ENCODE measurements at regions of chr11 and their contacts with region 1.

Region 1: GRCh38 chr11:17384002-17384511 is 4.4 kb downstream of the KCNJ11 start:
- DNase-seq: peak; percentile 73
- H3K4me3 ChIP-seq: no peak overlapping the region
- H3K27ac ChIP-seq: no peak overlapping the region
- H3K4me1 ChIP-seq: peaks cover 0 to 4% of the 10 kb centered on the region in 2 experiments; a peak in 1 of 4 replicates
- H3K27me3 ChIP-seq: no peaks in the 10 kb centered on the region
- CTCF ChIP-seq: peak; percentile 90
- EP300 ChIP-seq: no peak
- RAD21 ChIP-seq: peak; percentile 91

Region 2: DNA sequence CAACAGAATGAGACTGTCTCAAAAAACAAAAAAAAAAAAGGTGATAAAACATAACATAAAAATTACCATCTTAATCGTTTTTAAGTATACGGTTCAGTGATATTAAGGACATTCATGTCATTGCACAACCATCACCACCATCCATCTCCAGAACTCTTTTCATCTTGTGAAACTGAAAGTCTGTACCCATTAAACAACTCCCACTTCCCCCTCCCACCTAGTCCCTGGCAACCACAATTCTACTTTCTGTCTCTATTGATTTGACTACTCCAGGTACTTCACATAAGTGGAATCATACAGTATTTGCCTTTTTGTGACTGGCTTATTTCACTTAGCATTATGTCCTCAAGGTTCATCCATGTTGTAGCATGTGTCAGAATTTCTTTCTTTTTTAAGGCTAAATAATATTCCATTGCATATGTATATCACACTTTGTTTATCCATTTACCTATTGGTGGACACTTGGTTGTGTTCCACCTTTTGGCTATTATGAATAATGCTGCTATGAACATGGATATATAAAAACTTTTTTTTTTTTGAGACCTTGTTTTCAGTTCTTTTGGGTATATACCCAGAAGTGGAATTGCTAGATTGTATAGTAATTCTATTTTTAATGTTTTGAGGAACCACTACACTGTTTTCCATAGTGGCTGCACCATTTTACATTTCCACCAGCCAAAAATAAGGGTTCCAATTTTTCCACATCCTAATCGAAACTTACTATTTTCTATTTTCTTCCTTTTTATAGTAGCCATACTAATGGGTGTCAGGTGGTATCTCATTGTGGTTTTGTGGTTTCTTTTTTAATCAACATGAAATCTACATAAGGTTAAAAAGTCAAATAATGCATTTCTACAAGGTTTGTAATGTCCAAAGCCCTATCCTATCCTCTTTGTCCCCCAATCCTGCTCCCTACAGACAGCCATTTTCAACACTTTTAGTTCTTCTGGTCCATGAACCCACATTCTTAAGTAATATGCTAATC is 152.9 kb before region 1 on chr11:
- CTCF ChIA-PET with region 1: interaction called, 13 read pairs
- POLR2A ChIA-PET with region 1: no interaction called
- DNase-seq: no peak
- H3K4me3 ChIP-seq: no peak overlapping the region
- H3K27ac ChIP-seq: no peak overlapping the region
- H3K4me1 ChIP-seq: no peaks in the 10 kb centered on the region
- H3K27me3 ChIP-seq: no peaks in the 10 kb centered on the region
- CTCF ChIP-seq: no peak
- EP300 ChIP-seq: no peak
- RAD21 ChIP-seq: no peak

Region 3: GRCh38 chr11:17354601-17354991 is 29.5 kb before region 1 on chr11:
- CTCF ChIA-PET with region 1: interaction called, 12 read pairs
- POLR2A ChIA-PET with region 1: no interaction called
- DNase-seq: peak; percentile 71
- H3K4me3 ChIP-seq: peak overlapping the region in 1 of 2 experiments; percentile 77; a peak in 1 of 4 replicates
- H3K27ac ChIP-seq: no peak overlapping the region
- H3K4me1 ChIP-seq: peaks cover 5 to 14% of the 10 kb centered on the region in 2 experiments; a peak in 3 of 4 replicates
- H3K27me3 ChIP-seq: no peaks in the 10 kb centered on the region
- CTCF ChIP-seq: peak; percentile 76
- EP300 ChIP-seq: no peak
- RAD21 ChIP-seq: peak; percentile 42

Region 4: GRCh38 chr11:17405232-17406005 is 21.4 kb after region 1 on chr11:
- CTCF ChIA-PET with region 1: interaction called, 20 read pairs
- POLR2A ChIA-PET with region 1: no interaction called
- DNase-seq: peak; percentile 78
- H3K4me3 ChIP-seq: no peak overlapping the region
- H3K27ac ChIP-seq: peak overlapping the region in 1 of 2 experiments; percentile 43; a peak in 1 of 4 replicates
- H3K4me1 ChIP-seq: peaks cover 0 to 16% of the 10 kb centered on the region in 2 experiments; a peak in 1 of 4 replicates
- H3K27me3 ChIP-seq: no peaks in the 10 kb centered on the region
- CTCF ChIP-seq: peak; percentile 27; the same call in 1 of the 2 replicates
- EP300 ChIP-seq: no peak; a peak in 1 of 4 replicates
- RAD21 ChIP-seq: 0 out of 2 replicates have a peak, but pooled peaks have one; percentile 20

Region 5: DNA sequence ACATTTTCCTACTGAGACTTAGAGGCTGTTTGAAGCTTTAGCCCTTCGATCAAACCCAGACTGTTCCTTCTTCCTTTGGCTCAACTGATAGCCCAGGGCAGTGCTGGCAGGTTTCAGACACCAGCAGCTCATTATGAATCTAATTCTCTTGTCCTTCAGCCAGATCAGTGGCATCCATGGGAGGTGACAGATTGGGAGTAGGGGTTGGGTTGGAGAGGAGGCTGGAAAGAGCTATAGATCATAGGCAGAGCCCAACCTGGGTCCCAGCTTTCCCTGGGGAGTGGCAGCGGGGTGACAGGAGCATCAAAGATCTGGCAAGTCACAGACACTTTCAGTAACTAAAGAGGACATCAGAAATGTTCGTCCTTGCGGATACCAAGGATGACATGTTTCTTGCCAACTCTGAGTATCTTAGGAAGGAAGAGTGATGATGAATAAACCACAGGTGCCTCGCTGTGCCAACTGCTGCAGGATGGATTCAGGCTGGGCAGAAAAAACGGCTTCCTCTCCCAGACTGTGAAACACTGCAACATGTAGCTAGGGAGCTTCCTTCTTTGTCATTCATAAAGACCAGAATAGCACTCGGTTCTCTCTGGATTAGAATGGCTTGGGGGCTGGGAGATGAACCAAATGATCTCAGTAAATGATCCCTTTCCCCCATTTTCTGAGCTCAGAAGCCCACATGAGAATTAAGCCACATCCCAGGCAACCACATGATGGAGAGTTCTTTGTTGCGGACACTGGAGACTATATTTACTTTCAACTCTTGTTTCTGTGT is 73.5 kb after region 1 on chr11:
- CTCF ChIA-PET with region 1: interaction called, 11 read pairs
- POLR2A ChIA-PET with region 1: no interaction called
- DNase-seq: no peak
- H3K4me3 ChIP-seq: no peak overlapping the region
- H3K27ac ChIP-seq: no peak overlapping the region
- H3K4me1 ChIP-seq: peaks cover 0 to 2% of the 10 kb centered on the region in 2 experiments; a peak in 1 of 4 replicates
- H3K27me3 ChIP-seq: peaks cover 15% of the 10 kb centered on the region; the same call in 1 of the 2 replicates
- CTCF ChIP-seq: no peak
- EP300 ChIP-seq: no peak
- RAD21 ChIP-seq: no peak

Region 6: GRCh38 chr11:17489751-17490150 is 105.7 kb after region 1 on chr11:
- CTCF ChIA-PET with region 1: interaction called, 1,101 read pairs
- POLR2A ChIA-PET with region 1: no interaction called
- DNase-seq: no peak
- H3K4me3 ChIP-seq: no peak overlapping the region
- H3K27ac ChIP-seq: no peak overlapping the region
- H3K4me1 ChIP-seq: no peaks in the 10 kb centered on the region
- H3K27me3 ChIP-seq: no peaks in the 10 kb centered on the region
- CTCF ChIP-seq: no peak
- EP300 ChIP-seq: no peak
- RAD21 ChIP-seq: no peak

Region 7: GRCh38 chr11:17598700-17599459 is 214.8 kb after region 1 on chr11:
- CTCF ChIA-PET with region 1: interaction called, 11 read pairs
- POLR2A ChIA-PET with region 1: no interaction called
- DNase-seq: peak; percentile 85
- H3K4me3 ChIP-seq: no peak overlapping the region; a peak in 1 of 4 replicates
- H3K27ac ChIP-seq: no peak overlapping the region
- H3K4me1 ChIP-seq: no peaks in the 10 kb centered on the region; a peak in 1 of 4 replicates
- H3K27me3 ChIP-seq: no peaks in the 10 kb centered on the region
- CTCF ChIP-seq: peak; percentile 87
- EP300 ChIP-seq: no peak
- RAD21 ChIP-seq: peak; percentile 96